HEK293 (cell line): ENCODE measurements at regions of chr19 and their contacts with region 1.

Region 1: GRCh38 chr19:34974646-34975045 is 10.6 kb upstream of the ZNF792 start:
- H3K4me3 ChIP-seq: no peak overlapping the region
- H3K27ac ChIP-seq: no peak overlapping the region
- H3K4me1 ChIP-seq: no peaks in the 10 kb centered on the region; the same call in 1 of the 2 replicates
- CTCF ChIP-seq: no peak

Region 2: DNA sequence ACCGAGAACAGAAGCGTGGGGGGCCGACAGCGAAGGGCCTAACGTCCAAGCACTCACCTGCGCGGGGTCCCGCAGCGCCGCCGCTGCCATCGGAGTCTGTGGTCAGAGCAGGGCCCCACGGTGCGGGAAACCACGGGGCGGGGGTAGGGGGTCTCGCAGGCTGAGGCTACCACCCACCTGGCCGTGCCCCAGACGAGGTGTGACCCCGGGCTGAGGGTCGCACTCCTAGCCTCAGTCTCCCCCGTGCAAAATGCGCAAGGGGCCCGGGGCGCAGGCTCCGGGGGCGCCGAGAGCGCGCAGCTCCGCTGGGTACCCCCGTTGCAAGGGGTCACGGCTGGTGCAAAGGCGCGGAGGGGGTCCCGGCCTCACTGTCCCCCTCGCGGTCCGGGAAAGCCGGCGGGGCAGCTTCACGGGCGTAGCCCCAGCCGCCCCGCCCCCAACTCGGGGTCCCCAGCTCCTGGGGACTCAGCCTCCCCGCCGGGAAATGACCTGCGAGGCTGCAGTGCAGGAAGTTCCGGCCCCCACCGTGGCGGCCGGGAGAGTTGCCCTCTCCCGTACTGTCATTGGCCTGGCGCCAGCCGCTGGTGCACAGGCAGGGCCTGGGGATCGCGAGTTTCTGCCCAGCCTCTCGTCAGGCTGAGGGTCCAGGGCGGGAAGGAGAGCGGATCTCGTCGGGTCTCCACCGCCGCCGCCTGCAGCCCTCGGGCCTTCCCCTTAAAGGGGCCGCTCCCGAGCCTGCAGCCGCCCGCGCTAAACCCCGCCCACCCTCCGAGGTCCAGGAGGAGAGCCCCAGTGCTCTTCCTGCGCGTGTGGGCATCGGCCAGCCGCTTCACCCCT is 10.9 kb before region 1 on chr19 and contains the start of gene ZNF792:
- CTCF ChIA-PET with region 1: interaction called, 52 read pairs
- POLR2A ChIA-PET with region 1: interaction called, 3 read pairs
- H3K4me3 ChIP-seq: peak within 1 kb of the TSS; percentile 57
- H3K27ac ChIP-seq: peak within 1 kb of the TSS; percentile 84
- H3K4me1 ChIP-seq: peaks cover 16% of the 10 kb centered on the region
- CTCF ChIP-seq: peak; percentile 47; the same call in 1 of the 2 replicates

Region 3: DNA sequence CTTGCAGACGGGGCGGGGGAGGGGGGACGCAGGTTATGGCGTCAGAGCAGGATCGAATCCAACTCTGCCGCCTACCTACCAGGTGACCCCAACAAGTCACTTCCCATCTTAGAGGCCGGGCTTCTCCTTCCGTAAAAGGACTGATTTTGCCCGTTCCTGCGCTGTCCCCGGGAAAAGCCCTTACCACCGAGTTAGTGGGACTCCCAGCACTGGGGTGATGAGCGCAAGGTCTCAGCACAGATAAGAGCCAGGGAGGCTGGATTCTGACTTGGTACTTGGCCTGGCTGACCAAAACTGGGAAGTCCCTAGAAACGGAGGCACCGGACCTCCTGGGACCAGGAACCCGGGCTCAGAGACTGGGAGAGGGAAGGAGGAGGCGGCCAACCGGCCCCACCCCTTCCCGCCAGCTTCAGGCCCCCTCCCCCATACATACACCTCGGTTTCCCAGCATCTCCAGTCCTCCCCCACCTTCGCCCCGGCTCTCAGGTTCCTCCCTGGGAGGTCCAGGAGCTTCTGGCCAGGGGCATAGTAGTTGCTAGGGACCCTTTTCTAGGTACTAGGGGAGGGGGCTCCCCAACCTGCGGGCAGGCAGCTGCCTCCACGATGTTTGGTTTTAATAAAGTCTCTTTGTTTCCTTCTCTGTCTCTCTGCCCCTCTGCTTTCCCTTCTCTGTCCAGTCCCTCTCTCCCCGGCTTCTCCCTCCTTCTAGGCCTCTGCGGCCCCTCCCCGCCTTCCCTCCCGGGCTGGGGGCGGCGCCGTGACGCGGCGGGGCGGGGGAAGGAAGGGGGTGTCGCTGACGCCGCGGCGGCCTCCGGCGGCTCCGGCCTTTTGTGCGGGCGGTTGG is 25.1 kb after region 1 on chr19 and contains the start of gene GRAMD1A:
- CTCF ChIA-PET with region 1: interaction called, 15 read pairs
- POLR2A ChIA-PET with region 1: interaction called, 9 read pairs
- H3K4me3 ChIP-seq: peak within 1 kb of the TSS; percentile 63
- H3K27ac ChIP-seq: peak within 1 kb of the TSS; percentile 98
- H3K4me1 ChIP-seq: peaks cover 35% of the 10 kb centered on the region
- CTCF ChIP-seq: no peak

Region 4: GRCh38 chr19:35013031-35013819 is 38.6 kb after region 1 on chr19:
- CTCF ChIA-PET with region 1: interaction called, 96 read pairs
- POLR2A ChIA-PET with region 1: no interaction called
- H3K4me3 ChIP-seq: no peak overlapping the region
- H3K27ac ChIP-seq: no peak overlapping the region
- H3K4me1 ChIP-seq: no peaks in the 10 kb centered on the region
- CTCF ChIP-seq: peak; percentile 93

Region 5: GRCh38 chr19:35044317-35045117 is 69.9 kb after region 1 on chr19:
- CTCF ChIA-PET with region 1: interaction called, 20 read pairs
- POLR2A ChIA-PET with region 1: no interaction called
- H3K4me3 ChIP-seq: no peak overlapping the region
- H3K27ac ChIP-seq: no peak overlapping the region
- H3K4me1 ChIP-seq: peaks cover 5% of the 10 kb centered on the region; the same call in 1 of the 2 replicates
- CTCF ChIP-seq: peak; percentile 100